Activated CD4-positive, alpha-beta T cell treated with anti-CD3 and anti-CD28 coated beads, Interleukin-2, amount 10 ng/mL, durations not matched to agents 24 days and 14 days (primary cell): ENCODE measurements at regions of chr4 and their contacts with region 1.

Region 1: GRCh38 chr4:140523857-140524742 is at the start of gene ELMOD2:
- DNase-seq: peak; percentile 99
- H3K4me3 Mint-ChIP-seq: peak within 1 kb of the TSS; percentile 85
- H3K27ac Mint-ChIP-seq: peak within 1 kb of the TSS; percentile 34
- H3K4me1 Mint-ChIP-seq: peaks cover 16% of the 10 kb centered on the region
- H3K27me3 Mint-ChIP-seq: peaks cover 1% of the 10 kb centered on the region
- total RNA-seq, gene ELMOD2: 10.5 and 12.3 TPM in 2 replicates

Region 2: DNA sequence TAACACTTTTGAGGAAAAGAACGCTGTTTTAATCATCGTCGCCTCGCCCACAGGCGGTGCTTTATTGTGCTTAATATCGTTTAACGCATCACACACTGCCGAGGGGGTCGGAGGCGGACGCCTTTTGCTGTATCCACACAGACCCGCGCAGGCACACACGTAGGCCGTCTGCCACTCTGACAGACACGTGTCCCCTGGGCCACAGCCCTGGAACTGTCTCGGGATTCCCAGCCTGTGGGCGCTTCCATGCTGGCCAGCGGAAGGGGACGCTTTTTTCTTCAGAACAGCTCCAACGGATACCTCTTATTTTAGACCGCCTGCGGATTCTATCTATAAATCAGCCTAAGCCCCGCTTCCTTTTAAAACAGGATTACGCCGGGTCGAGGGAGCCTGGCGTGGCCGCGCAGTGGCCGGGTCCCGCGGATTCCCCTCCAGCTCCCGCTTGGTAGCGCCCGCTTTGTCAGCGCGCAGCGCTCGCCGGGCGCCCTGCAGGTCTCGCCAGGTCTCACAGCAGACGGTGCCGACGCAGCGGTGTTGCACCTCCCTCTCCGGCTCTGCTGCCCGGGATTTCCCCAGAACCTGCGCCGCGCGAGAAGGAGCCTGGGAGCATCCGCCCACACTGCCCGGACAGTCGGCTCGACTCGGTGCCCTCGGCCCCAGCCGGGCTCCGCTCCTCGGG is 1508.7 kb before region 1 on chr4 and contains the start of gene NOCT:
- intact Hi-C with region 1: loop called (anchors 2 kb)
- DNase-seq: peak; percentile 97
- H3K4me3 Mint-ChIP-seq: peak within 1 kb of the TSS; percentile 93
- H3K27ac Mint-ChIP-seq: peak within 1 kb of the TSS; percentile 96
- H3K4me1 Mint-ChIP-seq: peaks cover 35% of the 10 kb centered on the region
- H3K27me3 Mint-ChIP-seq: no peaks in the 10 kb centered on the region
- total RNA-seq, gene NOCT: 21.3 and 25.3 TPM in 2 replicates

Region 3: GRCh38 chr4:139665690-139666529 is 858.2 kb before region 1 on chr4 and contains the start of gene MGST2:
- intact Hi-C with region 1: loop called (anchors 5 kb)
- DNase-seq: peak; percentile 80
- H3K4me3 Mint-ChIP-seq: peak within 1 kb of the TSS; percentile 98
- H3K27ac Mint-ChIP-seq: peak within 1 kb of the TSS; percentile 98
- H3K4me1 Mint-ChIP-seq: peaks cover 38% of the 10 kb centered on the region
- H3K27me3 Mint-ChIP-seq: no peaks in the 10 kb centered on the region
- total RNA-seq, gene MGST2: 26.5 and 35.1 TPM in 2 replicates

Region 4: DNA sequence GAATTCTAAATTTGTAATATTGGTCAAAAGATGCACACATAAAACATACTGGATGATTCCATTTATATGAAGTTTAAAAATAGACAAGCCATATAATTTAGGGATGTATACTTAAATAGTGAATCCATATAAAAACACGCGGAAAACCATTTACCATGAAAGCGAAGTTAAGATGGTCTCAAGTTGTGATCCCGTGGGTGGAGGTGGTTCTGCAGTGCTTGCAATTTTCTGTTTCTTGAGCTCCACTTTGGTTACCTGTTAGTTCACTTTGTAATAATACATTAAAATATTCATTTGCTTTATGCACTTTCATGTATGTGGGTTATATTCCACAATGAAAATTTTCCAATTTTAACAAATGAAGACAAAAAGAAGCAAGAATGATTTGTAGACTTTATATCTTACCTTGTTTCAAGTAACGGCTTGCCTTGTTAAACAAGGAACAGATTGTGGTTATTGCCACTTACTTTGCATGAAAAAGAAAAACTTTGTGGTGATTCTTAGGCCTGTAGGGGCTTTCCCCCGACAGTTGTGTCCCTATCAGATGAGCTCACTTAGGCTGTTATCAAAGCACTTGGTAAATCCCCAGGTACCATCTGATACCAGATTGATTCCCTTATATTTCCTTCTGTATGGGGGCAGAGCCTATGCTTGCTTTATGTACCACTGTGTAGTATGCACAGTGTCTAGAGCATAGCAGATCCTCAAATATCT is 32.4 kb after region 1 on chr4:
- intact Hi-C with region 1: loop called (anchors 1 kb)
- DNase-seq: peak; percentile 72
- H3K4me3 Mint-ChIP-seq: no peak overlapping the region
- H3K27ac Mint-ChIP-seq: no peak overlapping the region
- H3K4me1 Mint-ChIP-seq: peaks cover 9% of the 10 kb centered on the region
- H3K27me3 Mint-ChIP-seq: peaks cover 37% of the 10 kb centered on the region

Region 5: DNA sequence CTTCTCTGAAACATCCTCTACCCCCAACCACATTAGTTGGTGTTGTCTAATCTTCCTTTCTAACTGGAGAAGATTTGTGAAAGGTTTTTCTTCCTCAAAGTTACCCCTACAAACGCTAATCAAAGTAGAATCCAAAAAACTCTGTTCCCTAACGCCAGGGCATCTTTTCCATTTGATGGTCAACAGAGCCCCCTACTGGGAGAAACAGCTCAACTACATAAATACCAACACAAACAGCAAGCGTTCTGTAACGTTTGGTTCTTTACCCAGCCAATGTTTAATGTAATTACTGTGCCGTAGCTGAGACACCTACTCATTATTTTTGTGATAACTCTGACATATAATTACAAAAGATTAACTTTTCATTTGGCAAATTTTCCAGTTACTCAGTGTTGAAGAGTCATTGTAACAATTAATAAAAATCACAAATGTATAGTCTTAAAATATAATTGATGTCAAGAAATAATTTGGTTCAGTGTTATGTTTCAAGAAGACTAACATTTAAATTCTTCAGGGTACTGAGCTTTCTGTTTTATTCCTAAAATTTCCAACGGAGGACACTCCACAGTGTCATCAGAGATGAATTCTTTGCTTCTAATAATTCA is 327.0 kb after region 1 on chr4:
- intact Hi-C with region 1: loop called (anchors 10 kb)
- DNase-seq: peak; percentile 78
- H3K4me3 Mint-ChIP-seq: no peak overlapping the region
- H3K27ac Mint-ChIP-seq: no peak overlapping the region
- H3K4me1 Mint-ChIP-seq: no peaks in the 10 kb centered on the region
- H3K27me3 Mint-ChIP-seq: peaks cover 10% of the 10 kb centered on the region